ENCODE measurements at regions of chr11 and their contacts with region 1.

Region 1: GRCh38 chr11:17991783-17992433 is 20.9 kb downstream of the SERGEF start:
- DNase-seq: peak; percentile 41
- ATAC-seq: peak; percentile 47; the same call in 1 of the 3 replicates
- H3K4me3 ChIP-seq: no peak overlapping the region
- H3K27ac ChIP-seq: no peak overlapping the region
- H3K4me1 ChIP-seq: peaks cover 46% of the 10 kb centered on the region
- H3K27me3 ChIP-seq: no peaks in the 10 kb centered on the region
- CTCF ChIP-seq: peak; percentile 76
- EP300 ChIP-seq: no peak
- POLR2A ChIP-seq: no peak
- RAD21 ChIP-seq: 0 out of 2 replicates have a peak, but pooled peaks have one; percentile 30

Region 2: GRCh38 chr11:18105802-18106574 is 114.1 kb after region 1 on chr11 and contains the start of gene SAAL1:
- CTCF ChIA-PET with region 1: interaction called, 16 read pairs
- POLR2A ChIA-PET with region 1: interaction called, 5 read pairs
- in situ Hi-C with region 1: no loop called
- intact Hi-C with region 1: loop called (anchors 1 kb)
- DNase-seq: peak; percentile 73
- ATAC-seq: peak; percentile 99
- H3K4me3 ChIP-seq: peak within 1 kb of the TSS; percentile 85 to 98 (median 96)
- H3K27ac ChIP-seq: peak within 1 kb of the TSS; percentile 52
- H3K4me1 ChIP-seq: peaks cover 21% of the 10 kb centered on the region
- H3K27me3 ChIP-seq: no peaks in the 10 kb centered on the region; a peak in 1 of 5 replicates
- CTCF ChIP-seq: peak; percentile 98
- EP300 ChIP-seq: no peak
- POLR2A ChIP-seq: peak; percentile 38 to 88; a peak in 3 of 4 replicates
- RAD21 ChIP-seq: peak; percentile 79
- total RNA-seq, gene SAAL1: 45.7 and 46.0 TPM in 2 replicates